Vagina (tissue), 2 donors: ENCODE measurements at regions of chr11 and their contacts with region 1.

Region 1: GRCh38 chr11:35391922-35392813 is 27.2 kb downstream of the SLC1A2 start:
- DNase-seq: no peak
- H3K4me3 ChIP-seq: no peak overlapping the region
- H3K27ac ChIP-seq: peak overlapping the region; percentile 24
- H3K4me1 ChIP-seq: peaks cover 32% of the 10 kb centered on the region
- H3K27me3 ChIP-seq: no peaks in the 10 kb centered on the region
- CTCF ChIP-seq: peak; percentile 72 to 90 (median 75)
- POLR2A ChIP-seq: no peak

Region 2: DNA sequence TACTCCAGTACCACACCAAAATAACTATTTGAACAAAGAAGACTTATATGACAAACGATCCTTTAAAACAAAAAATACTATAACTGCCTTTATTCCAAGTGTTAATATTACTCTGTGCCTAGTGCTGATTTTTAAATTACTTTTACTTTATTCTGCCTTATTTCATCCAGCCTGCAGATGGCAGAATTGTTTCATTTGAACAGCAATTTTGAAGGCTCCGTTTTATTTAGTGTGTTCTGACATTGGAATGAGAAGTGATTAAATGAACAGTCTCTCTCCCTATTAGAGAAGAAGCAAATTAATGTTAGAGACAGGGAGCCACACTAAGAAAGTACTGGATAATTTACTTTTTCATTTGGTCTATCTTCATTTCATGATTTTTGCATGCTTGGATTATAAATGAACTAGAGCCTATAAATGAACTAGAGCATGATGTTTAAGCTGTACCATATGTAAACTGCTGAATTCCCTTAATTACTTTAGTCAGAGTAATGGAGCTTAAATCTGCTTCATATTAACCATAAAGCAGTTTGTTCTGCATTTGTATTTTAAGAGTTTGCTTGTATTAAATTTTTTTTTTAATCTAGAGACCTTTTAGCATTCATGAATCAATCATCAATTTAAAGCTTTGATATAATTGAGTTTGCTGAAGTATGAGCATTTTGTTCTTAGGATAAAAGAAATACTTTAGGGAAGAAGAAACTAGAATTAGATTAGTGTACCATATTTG is 465.9 kb before region 1 on chr11:
- intact Hi-C with region 1: loop called (anchors 5 kb)
- DNase-seq: no peak
- H3K4me3 ChIP-seq: no peak overlapping the region
- H3K27ac ChIP-seq: no peak overlapping the region
- H3K4me1 ChIP-seq: peaks cover 27% of the 10 kb centered on the region
- H3K27me3 ChIP-seq: no peaks in the 10 kb centered on the region
- CTCF ChIP-seq: peak; percentile 38 to 71 (median 54)
- POLR2A ChIP-seq: no peak

Region 3: GRCh38 chr11:34997952-34998528 is 394.1 kb before region 1 on chr11:
- intact Hi-C with region 1: loop called (anchors 10 kb)
- DNase-seq: no peak
- H3K4me3 ChIP-seq: no peak overlapping the region
- H3K27ac ChIP-seq: no peak overlapping the region
- H3K4me1 ChIP-seq: peaks cover 6% of the 10 kb centered on the region
- H3K27me3 ChIP-seq: no peaks in the 10 kb centered on the region
- CTCF ChIP-seq: peak; percentile 15 to 56 (median 44)
- POLR2A ChIP-seq: no peak

Region 4: DNA sequence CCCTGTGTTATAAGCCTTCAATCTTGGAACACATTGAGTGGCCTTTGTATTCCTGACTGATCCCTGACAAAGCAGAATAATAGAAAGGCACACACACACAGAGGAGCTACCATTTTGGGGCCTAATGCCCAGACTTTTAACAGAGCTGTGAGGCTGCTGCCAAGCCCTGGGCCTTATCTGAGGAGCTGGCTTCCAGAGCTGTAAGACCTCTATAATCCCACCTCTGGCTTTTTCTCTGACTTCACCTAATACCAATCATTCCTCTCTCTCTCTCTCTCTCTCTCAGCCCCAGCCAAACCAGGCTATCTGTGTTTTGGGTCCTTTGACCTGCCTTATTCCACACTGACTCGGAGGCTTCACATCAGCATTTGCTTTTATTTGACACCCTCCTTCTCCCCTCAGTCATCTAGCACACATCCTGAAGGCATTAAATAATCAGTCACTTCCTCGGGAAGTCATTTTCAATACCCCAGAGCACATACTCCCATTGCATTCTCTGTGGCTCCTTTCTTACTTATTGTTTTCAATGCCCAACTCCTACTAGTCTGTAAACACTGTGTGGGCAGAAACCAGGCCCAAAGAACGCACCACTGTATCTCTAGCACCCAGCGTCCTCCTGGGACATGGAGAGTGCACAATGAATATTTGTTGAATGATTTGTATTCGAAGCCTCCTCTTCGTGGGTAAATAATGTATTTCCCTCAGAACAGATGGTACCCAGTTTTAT is 249.2 kb after region 1 on chr11:
- intact Hi-C with region 1: no loop called
- DNase-seq: no peak
- H3K4me3 ChIP-seq: no peak overlapping the region
- H3K27ac ChIP-seq: no peak overlapping the region
- H3K4me1 ChIP-seq: no peaks in the 10 kb centered on the region
- H3K27me3 ChIP-seq: no peaks in the 10 kb centered on the region
- CTCF ChIP-seq: no peak
- POLR2A ChIP-seq: no peak